ENCODE measurements at regions of chr7 and their contacts with region 1.

Region 1: DNA sequence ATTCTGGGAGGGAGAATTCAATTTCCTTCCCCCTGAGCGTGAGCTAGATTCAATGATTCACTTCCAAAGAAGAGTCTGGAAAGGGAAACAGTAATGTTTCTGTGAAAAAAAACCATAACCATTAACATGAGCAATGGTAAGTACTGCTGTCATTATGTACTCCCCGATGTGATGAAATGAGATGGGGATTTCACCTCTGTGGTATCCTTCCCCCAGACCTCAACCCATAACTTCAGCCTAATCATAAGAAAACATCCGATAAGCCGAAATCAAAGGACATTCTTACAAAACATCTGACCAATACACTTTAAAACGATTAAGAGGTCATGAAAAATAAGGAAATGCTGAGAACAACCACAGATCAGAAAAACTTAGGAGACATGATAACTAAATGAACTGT is 27.2 kb downstream of the EZH2 start:
- DNase-seq: no peak
- H3K4me3 Mint-ChIP-seq: no peak overlapping the region
- H3K27ac Mint-ChIP-seq: peak overlapping the region; percentile 79
- H3K4me1 Mint-ChIP-seq: peaks cover 47% of the 10 kb centered on the region
- H3K27me3 Mint-ChIP-seq: no peaks in the 10 kb centered on the region

Region 2: DNA sequence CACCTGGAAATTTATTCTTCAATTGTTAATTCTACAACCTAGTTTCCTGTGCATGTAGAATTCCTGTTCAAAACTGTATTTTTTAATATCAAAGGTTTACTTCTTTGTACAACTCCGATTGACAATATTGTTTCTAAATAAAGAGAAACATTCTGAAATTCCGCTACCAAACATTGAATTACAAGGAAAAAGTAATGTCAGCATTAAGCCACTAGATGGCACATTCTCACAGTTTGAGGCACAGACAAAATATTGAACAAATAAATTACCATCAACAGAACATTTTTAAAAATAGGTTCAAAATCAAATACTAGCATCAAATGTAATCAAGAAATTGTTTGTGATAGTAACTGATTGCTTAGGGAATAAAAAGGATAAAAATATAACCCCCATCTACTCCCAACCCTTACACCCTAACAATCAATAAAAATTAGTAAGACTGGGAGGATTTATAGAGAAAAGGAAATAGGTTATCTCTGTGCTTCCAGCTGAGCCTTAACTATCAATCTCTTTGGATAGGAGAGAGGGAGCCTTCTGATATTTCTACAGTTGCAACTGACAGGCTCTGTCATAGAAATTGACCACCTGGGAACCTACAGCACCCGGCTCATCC is 352.9 kb before region 1 on chr7:
- intact Hi-C with region 1: loop called (anchors 10 kb)
- DNase-seq: no peak
- H3K4me3 Mint-ChIP-seq: no peak overlapping the region
- H3K27ac Mint-ChIP-seq: no peak overlapping the region
- H3K4me1 Mint-ChIP-seq: peaks cover 23% of the 10 kb centered on the region
- H3K27me3 Mint-ChIP-seq: peaks cover 32% of the 10 kb centered on the region

Region 3: GRCh38 chr7:148729984-148730733 is 126.7 kb before region 1 on chr7:
- intact Hi-C with region 1: loop called (anchors 5 kb)
- DNase-seq: no peak
- H3K4me3 Mint-ChIP-seq: no peak overlapping the region
- H3K27ac Mint-ChIP-seq: no peak overlapping the region
- H3K4me1 Mint-ChIP-seq: peaks cover 43% of the 10 kb centered on the region
- H3K27me3 Mint-ChIP-seq: no peaks in the 10 kb centered on the region

Region 4: DNA sequence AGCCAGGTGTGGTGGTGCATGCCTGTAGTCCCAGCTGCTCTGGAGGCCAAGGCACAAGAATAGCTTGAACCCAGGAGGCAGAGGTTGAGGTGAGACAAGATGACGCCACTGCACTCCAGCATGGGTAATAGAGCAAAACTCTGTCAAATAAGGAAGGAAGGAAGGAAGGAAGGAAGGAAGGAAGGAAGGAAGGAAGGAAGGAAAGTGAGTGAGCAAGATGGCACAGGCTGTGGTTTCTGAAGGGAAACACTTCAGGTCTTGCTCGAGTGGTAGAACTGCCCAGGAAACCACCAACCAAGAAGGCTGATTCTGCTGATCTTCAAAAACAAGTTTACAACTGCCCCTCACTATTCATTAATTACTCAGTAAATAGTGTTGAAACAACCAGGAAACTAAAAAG is 18.0 kb before region 1 on chr7:
- intact Hi-C with region 1: loop called (anchors 2 kb)
- DNase-seq: no peak
- H3K4me3 Mint-ChIP-seq: no peak overlapping the region
- H3K27ac Mint-ChIP-seq: peak overlapping the region; percentile 63
- H3K4me1 Mint-ChIP-seq: peaks cover 40% of the 10 kb centered on the region
- H3K27me3 Mint-ChIP-seq: no peaks in the 10 kb centered on the region

Region 5: GRCh38 chr7:148877517-148877916 is 20.6 kb after region 1 on chr7:
- intact Hi-C with region 1: loop called (anchors 2 kb)
- DNase-seq: no peak
- H3K4me3 Mint-ChIP-seq: no peak overlapping the region
- H3K27ac Mint-ChIP-seq: peak overlapping the region; percentile 70
- H3K4me1 Mint-ChIP-seq: peaks cover 59% of the 10 kb centered on the region
- H3K27me3 Mint-ChIP-seq: no peaks in the 10 kb centered on the region

Region 6: DNA sequence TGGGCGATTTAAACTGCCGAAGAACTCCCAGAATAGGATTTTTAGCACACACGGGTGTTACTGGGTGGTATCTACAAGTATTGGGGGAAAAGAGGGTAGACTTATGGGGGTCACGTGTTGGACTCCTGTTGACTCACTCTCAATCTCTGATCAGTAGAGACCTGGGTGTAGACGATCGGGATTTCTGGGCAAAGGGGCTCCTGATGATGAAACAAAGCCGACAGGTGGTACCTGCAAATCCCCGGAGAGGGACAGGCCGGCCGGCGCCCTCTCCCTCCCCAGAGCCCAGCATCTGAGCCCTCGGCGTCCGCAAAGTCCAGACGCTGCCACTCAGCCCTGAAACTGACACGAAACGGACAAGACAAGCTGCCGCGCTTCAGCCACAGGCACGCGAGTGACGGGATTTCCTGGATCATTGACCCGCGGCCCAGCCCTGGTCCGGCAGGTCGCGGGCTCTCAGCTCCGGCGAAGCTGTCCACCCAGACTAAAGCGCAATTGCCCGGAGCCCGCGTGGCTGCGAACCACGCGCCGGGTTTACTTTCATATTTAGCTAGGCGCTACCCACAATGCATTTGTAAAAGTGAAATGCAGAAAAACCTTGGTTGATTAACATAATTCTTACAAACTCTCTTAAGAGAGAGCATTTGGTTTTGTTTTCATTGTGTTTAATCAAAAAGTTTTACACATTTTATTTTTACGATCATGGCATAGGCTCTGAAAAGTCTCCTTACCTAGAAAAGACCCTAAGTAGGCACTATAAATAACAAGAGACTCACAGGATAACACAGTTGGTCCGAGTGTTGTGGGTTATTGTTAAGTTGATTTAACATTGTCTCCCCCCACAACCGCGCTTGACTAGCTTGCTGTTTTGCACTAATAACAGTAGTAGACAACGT is 84.1 kb after region 1 on chr7:
- intact Hi-C with region 1: loop called (anchors 1 kb)
- DNase-seq: peak; percentile 66
- H3K4me3 Mint-ChIP-seq: peak overlapping the region; percentile 94
- H3K27ac Mint-ChIP-seq: peak overlapping the region; percentile 99
- H3K4me1 Mint-ChIP-seq: peaks cover 20% of the 10 kb centered on the region
- H3K27me3 Mint-ChIP-seq: no peaks in the 10 kb centered on the region